Heart right ventricle (tissue), 16 donors: ENCODE measurements at regions of chr1 and their contacts with region 1.

Region 1: DNA sequence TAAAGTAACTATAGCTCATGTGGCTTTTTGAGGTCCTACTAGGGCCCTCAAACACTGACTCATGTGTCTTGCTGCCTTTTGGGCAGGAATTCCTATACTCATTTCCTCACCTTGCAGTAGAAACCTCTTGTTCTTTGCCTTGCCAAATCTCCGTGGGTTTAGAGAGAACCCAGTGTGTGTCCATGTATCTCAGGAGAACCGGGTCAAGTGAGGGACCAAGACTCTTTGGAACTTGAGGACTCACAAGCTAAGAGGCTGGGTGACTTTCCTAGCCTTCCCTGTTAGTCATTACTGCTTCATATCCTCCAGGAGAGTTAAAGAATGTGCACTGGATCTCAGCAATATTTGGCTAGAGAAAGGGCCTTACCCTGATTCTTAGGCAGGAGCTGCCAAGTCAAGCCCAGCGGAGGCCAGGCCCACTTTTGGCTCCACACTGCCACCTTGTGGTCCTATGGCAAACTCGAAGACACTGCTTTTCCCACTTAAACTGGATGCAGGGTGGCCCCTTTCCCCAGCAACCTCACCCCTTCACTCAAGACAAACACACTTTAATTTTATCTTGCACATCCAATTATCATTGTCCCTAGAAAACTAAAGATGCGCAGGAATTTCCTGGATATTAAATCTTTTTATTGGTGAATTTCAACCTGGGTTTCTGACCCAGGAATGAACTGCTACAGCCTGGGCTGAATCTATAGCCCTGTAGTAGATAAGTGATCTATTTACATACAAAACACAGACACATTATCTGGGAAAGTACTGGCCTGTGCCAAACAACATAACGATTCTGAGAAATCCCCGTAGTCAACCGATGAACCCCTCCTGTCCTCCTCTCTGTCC is 10.6 kb downstream of the AVPR1B start:
- DNase-seq: peak; percentile 73 to 82
- ATAC-seq: peak; percentile 82 to 93 (median 88)
- H3K4me3 ChIP-seq: no peak overlapping the region
- H3K27ac ChIP-seq: no peak overlapping the region
- H3K4me1 ChIP-seq: peaks cover 0 to 22% (median 0%) of the 10 kb centered on the region in 9 donors
- H3K27me3 ChIP-seq: peaks cover 0 to 5% (median 0%) of the 10 kb centered on the region in 7 donors
- CTCF ChIP-seq: peak; percentile 86 to 92 (median 91)

Region 2: DNA sequence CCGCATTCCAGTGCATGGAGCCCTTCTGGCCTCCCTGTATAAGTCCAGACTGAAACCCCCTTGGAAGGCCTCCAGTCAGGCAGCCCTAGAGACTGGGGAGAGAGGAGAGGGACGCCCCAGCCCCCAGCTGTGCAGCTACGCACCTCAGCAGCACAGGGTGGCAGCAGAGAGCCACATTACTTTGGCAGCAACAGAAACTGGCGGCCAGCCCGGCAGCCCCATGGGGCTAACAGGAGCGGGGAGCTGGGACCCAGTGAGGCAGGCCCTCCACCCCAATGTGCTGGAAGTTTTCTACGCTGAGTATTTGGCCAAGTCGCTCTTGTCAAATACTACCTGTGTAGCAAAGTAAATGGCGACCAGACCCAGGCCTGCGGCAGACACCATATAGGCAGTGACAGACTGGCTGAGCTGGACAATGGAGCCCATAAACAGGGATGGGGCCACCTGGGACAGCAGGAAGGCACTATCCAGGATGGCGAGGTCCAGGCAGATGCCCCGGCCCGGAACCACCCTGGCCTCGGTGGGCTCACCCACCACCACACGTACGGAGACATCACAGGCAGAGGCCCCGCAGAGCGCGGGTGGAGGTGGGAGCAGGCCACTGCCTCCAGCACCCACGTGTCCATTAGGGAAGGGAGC is 447.5 kb before region 1 on chr1:
- intact Hi-C with region 1: loop called in 2 of 10 experiments (anchors 5 to 10 kb)
- DNase-seq: peak; percentile 77 to 86
- ATAC-seq: peak; percentile 76 to 91 (median 86)
- H3K4me3 ChIP-seq: no peak overlapping the region
- H3K27ac ChIP-seq: no peak overlapping the region
- H3K4me1 ChIP-seq: peaks cover 0 to 18% (median 8%) of the 10 kb centered on the region in 9 donors
- H3K27me3 ChIP-seq: no peaks in the 10 kb centered on the region
- CTCF ChIP-seq: peak; percentile 72 to 97 (median 88)

Region 3: DNA sequence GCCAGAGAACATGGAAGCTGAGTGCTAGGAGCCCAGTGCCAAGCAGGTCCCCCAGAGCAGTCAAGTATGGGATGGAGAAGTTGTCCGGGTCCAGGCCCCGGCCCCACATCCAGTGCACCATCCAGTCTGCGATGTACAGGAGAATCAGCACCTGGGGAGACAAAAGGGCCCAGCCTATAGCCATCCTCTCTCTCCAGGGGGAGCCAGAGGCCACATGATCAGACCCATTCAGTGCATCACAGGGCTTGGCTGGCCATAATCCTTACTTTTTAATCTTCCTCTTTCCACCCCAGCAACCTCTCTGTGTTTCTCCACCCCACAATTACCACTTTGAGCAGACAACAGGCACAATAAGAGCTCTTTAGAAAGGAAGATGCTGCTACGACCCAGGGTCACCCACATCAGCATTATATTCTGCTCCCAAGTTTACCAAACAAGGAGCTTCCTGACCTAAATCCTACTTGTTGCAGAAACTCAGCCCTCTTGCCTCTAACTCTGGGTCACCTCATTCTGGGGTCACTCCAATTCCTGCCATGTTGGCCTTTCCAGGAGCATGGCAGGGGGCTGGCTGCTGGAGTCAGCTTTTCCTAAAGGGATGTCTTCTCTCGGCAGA is 314.9 kb before region 1 on chr1:
- intact Hi-C with region 1: loop called in 4 of 10 experiments (anchors 5 to 10 kb)
- DNase-seq: peak; percentile 38 to 67
- ATAC-seq: peak; percentile 62 to 83 (median 76)
- H3K4me3 ChIP-seq: no peak overlapping the region
- H3K27ac ChIP-seq: peak overlapping the region in 2 of 10 donors; percentile 15 to 28
- H3K4me1 ChIP-seq: peaks cover 0 to 32% (median 5%) of the 10 kb centered on the region in 9 donors
- H3K27me3 ChIP-seq: no peaks in the 10 kb centered on the region
- CTCF ChIP-seq: peak; percentile 31 to 82 (median 79)

Region 4: GRCh38 chr1:205805082-205805712 is 301.4 kb before region 1 on chr1:
- intact Hi-C with region 1: loop called in 1 of 10 experiments (anchors 10 kb)
- DNase-seq: no peak
- ATAC-seq: no peak
- H3K4me3 ChIP-seq: peak overlapping the region in 6 of 10 donors; percentile 0 to 77 (median 18)
- H3K27ac ChIP-seq: peak overlapping the region in 1 of 10 donors; percentile 25
- H3K4me1 ChIP-seq: peaks cover 3 to 98% (median 63%) of the 10 kb centered on the region in 9 donors
- H3K27me3 ChIP-seq: no peaks in the 10 kb centered on the region
- CTCF ChIP-seq: no peak

Region 5: GRCh38 chr1:205972491-205973164 is 133.9 kb before region 1 on chr1:
- intact Hi-C with region 1: no loop called
- DNase-seq: no peak
- ATAC-seq: no peak
- H3K4me3 ChIP-seq: no peak overlapping the region
- H3K27ac ChIP-seq: peak overlapping the region in 3 of 10 donors; percentile 2 to 60 (median 30)
- H3K4me1 ChIP-seq: peaks cover 5 to 40% (median 27%) of the 10 kb centered on the region in 9 donors
- H3K27me3 ChIP-seq: no peaks in the 10 kb centered on the region
- CTCF ChIP-seq: no peak

Region 6: DNA sequence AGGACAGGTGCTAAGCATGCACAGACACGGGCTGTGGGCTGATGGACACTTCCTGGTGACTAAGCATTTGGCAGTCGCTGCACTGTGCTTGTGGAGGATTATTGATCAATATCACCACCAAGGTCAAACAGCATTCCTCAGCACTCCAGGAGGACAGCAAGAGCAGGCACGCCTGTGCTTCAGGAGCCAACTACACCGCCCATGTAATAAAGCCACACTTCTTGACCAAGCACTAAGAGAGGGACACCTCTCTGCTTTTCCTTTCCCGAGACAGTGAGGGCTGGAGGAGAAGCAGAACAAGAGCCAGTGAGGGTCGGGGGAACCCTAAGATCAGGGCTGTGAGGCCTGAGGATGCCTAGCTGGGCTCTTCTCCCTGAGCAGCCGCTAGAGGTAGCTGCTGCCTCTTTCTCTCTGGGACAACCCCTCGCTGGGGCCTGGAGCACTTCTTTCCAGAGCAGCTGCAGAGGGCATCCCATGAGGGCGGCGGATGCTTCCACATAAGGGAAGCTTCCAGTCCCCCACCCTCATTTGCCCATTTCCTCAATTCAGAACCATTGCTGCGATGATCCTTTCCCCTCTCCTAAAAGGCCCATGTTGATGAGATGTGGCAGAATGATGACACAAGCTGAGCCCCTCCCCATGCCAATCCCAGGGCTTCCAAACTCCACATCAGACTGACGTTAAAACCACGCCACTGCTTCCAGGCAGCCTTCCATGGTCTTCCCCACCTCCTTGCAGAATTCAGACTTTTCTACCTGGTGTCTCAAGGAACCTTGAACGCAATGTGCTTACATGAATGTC is 122.4 kb before region 1 on chr1:
- intact Hi-C with region 1: loop called (anchors 1 to 5 kb)
- DNase-seq: peak; percentile 64 to 71
- ATAC-seq: peak; percentile 73 to 89 (median 86)
- H3K4me3 ChIP-seq: no peak overlapping the region
- H3K27ac ChIP-seq: no peak overlapping the region
- H3K4me1 ChIP-seq: peaks cover 0 to 48% (median 15%) of the 10 kb centered on the region in 9 donors
- H3K27me3 ChIP-seq: no peaks in the 10 kb centered on the region
- CTCF ChIP-seq: peak; percentile 44 to 85 (median 77)

Region 7: DNA sequence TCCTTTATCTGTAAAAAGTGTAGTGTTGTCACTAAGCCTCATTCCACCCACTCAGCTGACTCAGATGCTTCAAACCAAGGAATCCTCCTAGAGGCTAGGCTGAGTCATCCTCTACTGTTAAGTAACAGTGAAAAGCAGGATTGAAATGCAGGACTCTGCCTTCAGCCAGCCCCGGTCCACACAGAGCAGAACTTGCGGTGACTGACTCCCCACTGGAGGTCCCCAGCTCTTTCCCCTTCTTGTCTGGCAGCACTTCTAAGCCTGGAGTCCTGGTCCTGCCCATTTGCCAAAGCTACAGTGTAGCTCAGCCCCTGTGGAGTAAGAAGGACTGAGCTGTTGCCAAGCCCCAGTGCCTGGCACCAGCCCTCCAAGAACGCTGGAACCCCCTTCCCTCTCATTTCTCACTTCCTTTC is 105.1 kb before region 1 on chr1:
- intact Hi-C with region 1: no loop called
- DNase-seq: no peak
- ATAC-seq: peak in 7 of 8 donors; percentile 32 to 79 (median 66)
- H3K4me3 ChIP-seq: peak overlapping the region in 5 of 10 donors; percentile 45 to 59 (median 51)
- H3K27ac ChIP-seq: peak overlapping the region in 3 of 10 donors; percentile 20 to 67 (median 47)
- H3K4me1 ChIP-seq: peaks cover 0 to 61% (median 22%) of the 10 kb centered on the region in 9 donors
- H3K27me3 ChIP-seq: no peaks in the 10 kb centered on the region
- CTCF ChIP-seq: no peak

Region 8: GRCh38 chr1:206030714-206031113 is 75.8 kb before region 1 on chr1:
- intact Hi-C with region 1: loop called (anchors 1 to 10 kb)
- DNase-seq: peak; percentile 41 to 42
- ATAC-seq: peak in 7 of 8 donors; percentile 67 to 79 (median 76)
- H3K4me3 ChIP-seq: no peak overlapping the region
- H3K27ac ChIP-seq: no peak overlapping the region
- H3K4me1 ChIP-seq: peaks cover 0 to 7% (median 0%) of the 10 kb centered on the region in 9 donors
- H3K27me3 ChIP-seq: peaks cover 0 to 6% (median 0%) of the 10 kb centered on the region in 7 donors
- CTCF ChIP-seq: peak in 8 of 9 donors; percentile 49 to 87 (median 74)

Region 9: DNA sequence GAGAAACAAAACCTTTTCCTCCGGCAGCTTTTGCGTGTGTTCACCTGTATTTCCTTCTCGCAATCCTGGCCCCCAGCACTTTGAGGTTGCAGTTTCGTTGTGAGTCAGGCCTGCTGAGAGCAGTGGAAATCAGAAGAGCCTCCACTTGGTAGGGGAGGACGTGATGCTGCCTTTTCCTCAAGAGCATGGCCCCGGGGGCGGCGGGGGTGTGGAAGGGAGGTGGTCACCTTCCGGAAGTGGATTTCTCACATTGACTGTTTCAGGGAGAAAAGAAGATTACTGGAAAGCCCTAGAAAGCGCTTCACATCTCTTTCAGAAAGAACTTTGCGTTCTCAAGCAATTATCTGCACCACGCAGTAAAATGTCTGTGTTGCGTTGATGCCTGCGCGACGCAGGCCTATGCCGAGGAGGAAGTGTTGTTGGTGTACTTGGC is 677.9 kb after region 1 on chr1:
- intact Hi-C with region 1: no loop called
- DNase-seq: no peak
- ATAC-seq: no peak
- H3K4me3 ChIP-seq: no peak overlapping the region
- H3K27ac ChIP-seq: peak overlapping the region in 1 of 10 donors; percentile 47
- H3K4me1 ChIP-seq: peaks cover 0 to 23% (median 0%) of the 10 kb centered on the region in 9 donors
- H3K27me3 ChIP-seq: no peaks in the 10 kb centered on the region
- CTCF ChIP-seq: no peak

Region 10: DNA sequence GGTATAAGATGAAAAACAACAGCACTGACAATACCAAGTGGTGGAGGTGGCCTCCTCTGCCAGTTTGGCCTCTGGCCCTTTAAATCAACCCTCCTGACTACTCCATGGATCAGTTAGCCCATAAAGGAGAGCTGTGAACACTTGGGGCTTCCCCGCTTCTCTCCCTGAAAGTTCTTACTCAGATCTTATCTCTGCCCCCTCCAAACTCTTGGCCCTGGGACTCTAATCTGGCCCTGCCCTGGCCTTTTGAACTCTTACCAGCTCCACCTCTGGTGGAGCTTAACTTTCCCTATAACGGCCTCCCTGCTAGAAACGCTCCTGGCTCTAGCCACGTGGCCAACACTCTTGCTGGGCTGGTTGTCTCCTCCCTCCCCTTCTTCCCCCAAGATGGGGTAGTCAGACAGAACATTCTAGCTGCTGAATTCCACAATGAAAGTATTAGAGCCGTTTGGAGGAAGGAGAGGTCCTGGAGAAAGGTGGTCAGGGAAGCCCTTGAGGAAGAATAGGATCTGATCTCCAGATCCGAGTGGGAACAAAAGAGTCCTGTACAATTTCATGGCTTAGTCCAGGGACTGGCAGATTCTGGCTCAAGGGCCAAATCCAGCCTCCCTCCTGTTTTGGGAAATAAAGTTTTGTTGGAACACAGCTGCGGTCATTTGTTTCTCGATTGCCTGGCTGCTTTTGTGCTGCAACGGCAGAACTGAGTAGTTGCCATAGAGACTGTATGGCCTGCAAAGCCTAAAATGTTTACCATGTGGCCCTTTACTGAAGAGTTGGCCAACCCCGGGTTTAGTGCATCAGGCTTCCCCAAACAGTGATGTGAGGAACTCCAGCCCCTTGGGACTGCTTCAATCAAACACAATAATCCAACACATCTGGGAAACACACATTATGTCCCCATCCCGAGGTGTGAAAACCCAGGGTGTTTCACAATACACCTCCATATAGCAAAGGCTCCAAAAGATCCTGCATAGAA is 849.2 kb after region 1 on chr1:
- intact Hi-C with region 1: no loop called
- DNase-seq: no peak
- ATAC-seq: peak in 1 of 8 donors; percentile 41
- H3K4me3 ChIP-seq: no peak overlapping the region
- H3K27ac ChIP-seq: no peak overlapping the region
- H3K4me1 ChIP-seq: peaks cover 0 to 4% (median 0%) of the 10 kb centered on the region in 9 donors
- H3K27me3 ChIP-seq: peaks cover 0 to 17% (median 0%) of the 10 kb centered on the region in 7 donors
- CTCF ChIP-seq: no peak